SK-N-SH (cell line): ENCODE measurements at regions of chr17 and their contacts with region 1.

Region 1: GRCh38 chr17:50853015-50853615 is 13.0 kb downstream of the TOB1 start:
- DNase-seq: no peak
- H3K4me3 ChIP-seq: no peak overlapping the region
- H3K27ac ChIP-seq: no peak overlapping the region
- H3K4me1 ChIP-seq: peaks cover 0 to 9% of the 10 kb centered on the region in 2 experiments; a peak in 1 of 4 replicates
- H3K27me3 ChIP-seq: no peaks in the 10 kb centered on the region
- CTCF ChIP-seq: no peak
- EP300 ChIP-seq: no peak
- RAD21 ChIP-seq: no peak

Region 2: GRCh38 chr17:50611634-50612033 is 241.5 kb before region 1 on chr17:
- CTCF ChIA-PET with region 1: no interaction called
- POLR2A ChIA-PET with region 1: no interaction called
- DNase-seq: no peak
- H3K4me3 ChIP-seq: no peak overlapping the region
- H3K27ac ChIP-seq: no peak overlapping the region
- H3K4me1 ChIP-seq: peaks cover 0 to 40% of the 10 kb centered on the region in 2 experiments; a peak in 1 of 4 replicates
- H3K27me3 ChIP-seq: no peaks in the 10 kb centered on the region
- CTCF ChIP-seq: no peak
- EP300 ChIP-seq: no peak
- RAD21 ChIP-seq: no peak

Region 3: DNA sequence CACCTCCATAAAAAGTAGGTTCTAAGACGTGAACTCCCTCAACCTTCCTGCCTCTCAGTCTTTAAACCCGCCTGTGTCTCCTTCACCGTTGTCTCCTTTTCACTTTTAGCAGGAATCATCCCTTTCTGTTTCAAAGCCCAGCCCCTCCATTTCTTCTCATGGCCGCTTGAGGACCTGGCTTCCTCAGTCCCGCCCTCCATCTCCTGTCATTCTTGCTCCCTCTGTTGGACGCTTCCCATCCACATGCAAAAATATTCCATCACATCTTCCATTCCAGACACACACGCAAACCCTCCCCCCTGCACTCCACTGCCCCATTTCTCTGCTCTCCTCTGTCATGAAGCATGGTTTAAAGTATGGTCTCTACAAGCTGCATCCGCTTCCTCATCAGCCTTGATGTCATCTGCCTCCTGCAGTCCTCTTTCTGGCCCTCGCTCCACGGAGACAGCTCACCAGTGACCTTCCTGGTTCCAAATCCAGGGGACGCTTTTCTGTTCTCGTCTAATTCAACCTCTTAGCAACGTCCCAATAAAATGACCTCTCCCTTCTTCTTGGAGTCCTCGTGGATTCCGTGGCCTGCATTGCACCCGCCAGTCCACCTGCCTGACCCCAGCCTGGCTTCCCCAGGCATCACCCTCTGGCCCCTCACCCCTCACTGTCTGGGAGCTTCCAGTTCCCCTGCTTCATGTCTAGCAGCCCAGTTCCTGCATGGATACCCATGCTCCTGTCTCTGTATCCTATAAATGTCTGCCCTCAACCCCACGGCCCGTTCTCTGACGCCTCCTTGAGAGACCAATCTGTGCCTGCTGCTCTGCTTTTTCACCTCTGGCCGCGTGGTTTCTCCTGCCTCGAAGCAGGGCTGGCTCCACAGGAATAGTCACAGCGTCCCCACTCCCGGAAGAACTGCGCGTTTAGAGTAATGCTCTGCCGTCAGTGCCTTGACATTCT is 171.6 kb before region 1 on chr17:
- CTCF ChIA-PET with region 1: no interaction called
- POLR2A ChIA-PET with region 1: no interaction called
- DNase-seq: peak; percentile 94
- H3K4me3 ChIP-seq: no peak overlapping the region
- H3K27ac ChIP-seq: peak overlapping the region in 1 of 2 experiments; percentile 7; a peak in 1 of 4 replicates
- H3K4me1 ChIP-seq: peaks cover 11 to 14% of the 10 kb centered on the region in 2 experiments; a peak in 3 of 4 replicates
- H3K27me3 ChIP-seq: no peaks in the 10 kb centered on the region
- CTCF ChIP-seq: peak; percentile 88
- EP300 ChIP-seq: no peak; a peak in 1 of 4 replicates
- RAD21 ChIP-seq: peak; percentile 97

Region 4: GRCh38 chr17:50828508-50829170 is 24.5 kb before region 1 on chr17:
- CTCF ChIA-PET with region 1: interaction called, 28 read pairs
- POLR2A ChIA-PET with region 1: no interaction called
- DNase-seq: no peak
- H3K4me3 ChIP-seq: no peak overlapping the region
- H3K27ac ChIP-seq: no peak overlapping the region
- H3K4me1 ChIP-seq: peaks cover 0 to 4% of the 10 kb centered on the region in 2 experiments; a peak in 1 of 4 replicates
- H3K27me3 ChIP-seq: peaks cover 12% of the 10 kb centered on the region; the same call in 1 of the 2 replicates
- CTCF ChIP-seq: no peak
- EP300 ChIP-seq: no peak
- RAD21 ChIP-seq: no peak

Region 5: GRCh38 chr17:50865984-50866774 is 13.1 kb after region 1 on chr17 and contains the start of gene TOB1:
- CTCF ChIA-PET with region 1: interaction called, 210 read pairs
- POLR2A ChIA-PET with region 1: interaction called, 72 read pairs
- DNase-seq: peak; percentile 99
- H3K4me3 ChIP-seq: peak within 1 kb of the TSS; percentile 79 to 90
- H3K27ac ChIP-seq: peak within 1 kb of the TSS; percentile 97 to 100
- H3K4me1 ChIP-seq: peaks cover 7 to 30% of the 10 kb centered on the region in 2 experiments; a peak in 2 of 4 replicates
- H3K27me3 ChIP-seq: no peaks in the 10 kb centered on the region
- CTCF ChIP-seq: no peak
- EP300 ChIP-seq: 0 out of 4 replicates have a peak, but pooled peaks of 1 of the 2 experiments have one; percentile 12
- RAD21 ChIP-seq: no peak; the same call in 1 of the 2 replicates
- polyA plus RNA-seq, gene TOB1: 19.3 and 21.8 TPM in 2 replicates

Region 6: GRCh38 chr17:50931144-50931908 is 78.2 kb after region 1 on chr17:
- CTCF ChIA-PET with region 1: interaction called, 11 read pairs
- POLR2A ChIA-PET with region 1: interaction called, 3 read pairs
- DNase-seq: peak; percentile 95
- H3K4me3 ChIP-seq: peak overlapping the region; percentile 41 to 62
- H3K27ac ChIP-seq: peak overlapping the region; percentile 93 to 98
- H3K4me1 ChIP-seq: peaks cover 15 to 41% of the 10 kb centered on the region in 2 experiments
- H3K27me3 ChIP-seq: no peaks in the 10 kb centered on the region
- CTCF ChIP-seq: no peak
- EP300 ChIP-seq: peak in 1 of 2 experiments; percentile 45; a peak in 1 of 4 replicates
- RAD21 ChIP-seq: no peak; the same call in 1 of the 2 replicates

Region 7: DNA sequence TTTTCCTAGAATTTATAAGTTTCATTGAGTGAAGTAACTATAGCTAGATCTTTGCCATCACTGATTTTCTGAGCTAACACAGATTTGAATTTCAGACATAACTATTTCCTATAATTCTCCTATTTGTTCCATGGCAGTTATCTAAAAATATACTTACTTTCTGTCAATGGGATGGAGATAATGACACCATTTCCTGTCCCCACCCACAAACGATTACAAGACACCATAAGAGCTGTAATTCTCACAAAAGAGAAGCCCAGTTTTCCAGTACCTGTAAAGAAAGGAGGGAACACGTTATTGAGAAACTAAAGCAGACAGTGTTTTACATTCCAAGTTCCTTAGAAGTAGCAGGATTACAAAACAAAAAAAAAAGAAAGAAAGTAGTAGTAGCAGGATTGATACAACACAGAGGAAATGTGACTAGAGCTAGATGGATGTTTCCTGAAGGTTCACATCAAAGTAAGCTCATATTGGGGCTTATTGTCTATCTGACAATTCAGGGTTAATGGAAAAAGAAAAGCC is 123.9 kb after region 1 on chr17:
- CTCF ChIA-PET with region 1: interaction called, 16 read pairs
- POLR2A ChIA-PET with region 1: no interaction called
- DNase-seq: no peak
- H3K4me3 ChIP-seq: no peak overlapping the region
- H3K27ac ChIP-seq: peak overlapping the region in 1 of 2 experiments; percentile 26; a peak in 1 of 4 replicates
- H3K4me1 ChIP-seq: peaks cover 10 to 31% of the 10 kb centered on the region in 2 experiments; a peak in 3 of 4 replicates
- H3K27me3 ChIP-seq: no peaks in the 10 kb centered on the region
- CTCF ChIP-seq: no peak
- EP300 ChIP-seq: no peak
- RAD21 ChIP-seq: no peak

Region 8: DNA sequence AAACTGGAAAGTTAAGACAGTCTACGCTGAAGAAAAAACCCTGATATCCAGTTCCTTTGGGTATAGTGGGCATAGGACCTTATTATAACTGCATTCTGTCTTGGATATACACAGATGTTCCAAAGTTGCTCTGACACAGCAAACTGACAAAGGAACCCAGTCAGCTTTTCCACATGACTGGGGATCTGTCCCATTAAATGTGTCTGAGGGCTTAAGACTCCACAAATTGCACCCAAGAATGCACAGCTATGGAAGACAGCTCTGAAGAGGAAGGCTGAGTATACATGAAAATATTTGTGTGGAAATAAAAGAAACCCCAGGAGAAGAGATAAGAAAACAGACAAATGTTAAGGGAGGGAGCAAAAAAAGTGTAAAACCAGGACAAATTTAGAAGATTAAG is 153.5 kb after region 1 on chr17:
- CTCF ChIA-PET with region 1: interaction called, 36 read pairs
- POLR2A ChIA-PET with region 1: no interaction called
- DNase-seq: no peak
- H3K4me3 ChIP-seq: no peak overlapping the region
- H3K27ac ChIP-seq: peak overlapping the region in 1 of 2 experiments; percentile 1; a peak in 1 of 4 replicates
- H3K4me1 ChIP-seq: no peaks in the 10 kb centered on the region
- H3K27me3 ChIP-seq: no peaks in the 10 kb centered on the region
- CTCF ChIP-seq: no peak
- EP300 ChIP-seq: no peak
- RAD21 ChIP-seq: no peak

Region 9: DNA sequence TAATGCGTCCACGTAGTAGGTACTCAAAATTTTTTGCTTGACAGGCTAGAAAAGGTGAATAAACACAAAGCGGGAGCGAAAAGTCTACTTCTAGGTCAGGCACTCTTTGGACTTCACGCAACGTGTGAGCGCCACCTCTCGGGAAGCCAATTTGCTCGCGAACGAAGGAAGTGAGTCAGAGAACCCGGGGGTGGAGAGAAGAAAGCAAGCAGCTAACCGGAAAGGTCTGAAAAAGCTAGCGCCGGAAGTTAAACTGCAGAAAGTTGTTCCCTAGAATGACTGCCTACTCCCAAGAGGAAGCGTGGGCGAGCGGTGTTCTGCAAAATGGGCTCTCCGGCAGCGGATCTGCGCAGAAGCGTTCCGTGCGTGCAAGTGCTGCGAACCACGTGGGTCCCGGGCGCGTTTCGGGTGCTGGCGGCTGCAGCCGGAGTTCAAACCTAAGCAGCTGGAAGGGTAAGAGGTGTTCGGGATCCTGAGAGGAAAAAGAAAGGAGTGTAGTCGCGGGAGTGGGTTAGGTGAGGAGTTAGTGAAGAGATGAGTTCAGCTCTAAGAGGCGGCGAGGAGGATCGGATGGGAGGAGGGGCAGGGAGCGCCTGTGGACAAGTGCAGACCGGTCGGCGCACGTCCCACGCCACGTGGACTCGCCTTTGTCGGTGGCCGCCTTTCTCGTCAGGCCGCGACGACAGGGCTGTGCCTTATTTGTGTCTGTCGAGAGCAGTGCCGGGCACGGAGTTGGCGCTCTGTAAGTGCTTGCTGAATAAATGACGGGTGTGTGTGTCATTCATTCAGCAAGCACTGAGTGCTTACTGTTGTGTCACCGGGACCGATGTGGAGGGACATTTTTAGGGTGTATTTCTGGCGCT is 300.3 kb after region 1 on chr17 and contains the start of gene NME1:
- CTCF ChIA-PET with region 1: interaction called, 18 read pairs
- POLR2A ChIA-PET with region 1: no interaction called
- DNase-seq: peak; percentile 96
- H3K4me3 ChIP-seq: peak within 1 kb of the TSS; percentile 69 to 72
- H3K27ac ChIP-seq: peak within 1 kb of the TSS; percentile 81 to 94
- H3K4me1 ChIP-seq: peaks cover 9 to 11% of the 10 kb centered on the region in 2 experiments; a peak in 3 of 4 replicates
- H3K27me3 ChIP-seq: no peaks in the 10 kb centered on the region
- CTCF ChIP-seq: peak; percentile 99
- EP300 ChIP-seq: peak; percentile 52 to 76; a peak in 3 of 4 replicates
- RAD21 ChIP-seq: peak; percentile 98
- polyA plus RNA-seq, gene NME1: 654 and 658 TPM in 2 replicates